Activated CD4-positive, alpha-beta T cell treated with anti-CD3 and anti-CD28 coated beads for 36 hours (primary cell): ENCODE measurements at regions of chr22 and their contacts with region 1.

Region 1: DNA sequence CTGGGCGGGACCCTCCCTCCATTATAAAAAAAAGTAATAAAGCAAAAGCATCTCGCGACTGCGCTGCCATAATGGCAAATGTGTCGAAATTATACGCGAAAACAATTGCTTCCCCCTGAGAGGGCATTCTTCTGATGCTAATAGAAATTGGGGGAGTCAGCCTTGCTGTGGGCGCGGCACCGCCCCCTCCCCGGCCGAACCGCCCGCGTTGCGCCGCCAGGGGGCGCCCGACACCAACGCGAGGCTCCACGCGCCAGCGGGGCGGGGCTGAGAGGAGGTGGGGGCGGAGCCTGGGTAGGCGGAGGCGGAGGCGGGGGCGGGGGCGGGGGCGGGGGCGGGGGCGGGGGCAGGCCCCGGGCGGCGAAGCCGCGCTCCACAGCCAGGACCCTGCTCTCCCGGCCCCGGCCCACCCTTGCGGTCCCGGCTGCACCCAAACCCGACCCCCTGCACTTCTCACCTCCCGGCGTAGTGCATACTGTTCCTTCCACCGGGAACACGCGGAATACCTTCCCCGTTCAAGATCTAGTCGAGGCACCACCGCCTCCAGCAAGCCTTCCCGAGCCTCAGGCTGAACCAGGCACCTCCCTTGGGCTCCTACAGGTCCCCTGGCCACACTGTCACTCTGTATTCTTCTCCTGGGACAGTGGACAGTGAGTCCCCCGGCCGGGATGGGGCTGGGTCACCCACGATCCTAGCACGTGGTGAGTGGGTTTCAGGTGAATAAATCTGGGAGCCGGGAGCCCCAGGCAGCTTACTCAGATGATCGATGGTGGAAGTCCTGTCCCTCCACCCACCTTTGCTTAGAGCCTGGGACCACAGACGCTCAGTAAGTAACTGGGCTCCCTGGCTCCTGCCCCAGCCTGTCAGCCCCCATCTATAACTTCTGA is 15.5 kb upstream of the UPK3A start:
- DNase-seq: peak; percentile 90
- ATAC-seq: peak; percentile 87
- H3K4me3 Mint-ChIP-seq: peak overlapping the region; percentile 67
- H3K27ac Mint-ChIP-seq: no peak overlapping the region
- H3K4me1 Mint-ChIP-seq: peaks cover 9% of the 10 kb centered on the region
- H3K27me3 Mint-ChIP-seq: peaks cover 10% of the 10 kb centered on the region

Region 2: GRCh38 chr22:45154383-45154782 is 114.8 kb before region 1 on chr22:
- CTCF ChIA-PET with region 1: no interaction called
- POLR2A ChIA-PET with region 1: no interaction called
- intact Hi-C with region 1: no loop called
- DNase-seq: no peak
- ATAC-seq: peak; percentile 30
- H3K4me3 Mint-ChIP-seq: no peak overlapping the region
- H3K27ac Mint-ChIP-seq: no peak overlapping the region
- H3K4me1 Mint-ChIP-seq: peaks cover 6% of the 10 kb centered on the region
- H3K27me3 Mint-ChIP-seq: no peaks in the 10 kb centered on the region

Region 3: GRCh38 chr22:45240810-45241631 is 28.2 kb before region 1 on chr22 and contains the start of gene KIAA0930:
- CTCF ChIA-PET with region 1: no interaction called
- POLR2A ChIA-PET with region 1: no interaction called
- intact Hi-C with region 1: loop called in 1 of 2 experiments (anchors 1 kb)
- DNase-seq: peak; percentile 91
- ATAC-seq: peak; percentile 69
- H3K4me3 Mint-ChIP-seq: peak within 1 kb of the TSS; percentile 89
- H3K27ac Mint-ChIP-seq: peak within 1 kb of the TSS; percentile 78
- H3K4me1 Mint-ChIP-seq: peaks cover 10% of the 10 kb centered on the region
- H3K27me3 Mint-ChIP-seq: no peaks in the 10 kb centered on the region
- total RNA-seq, gene KIAA0930: 24.8 to 29.6 TPM

Region 4: DNA sequence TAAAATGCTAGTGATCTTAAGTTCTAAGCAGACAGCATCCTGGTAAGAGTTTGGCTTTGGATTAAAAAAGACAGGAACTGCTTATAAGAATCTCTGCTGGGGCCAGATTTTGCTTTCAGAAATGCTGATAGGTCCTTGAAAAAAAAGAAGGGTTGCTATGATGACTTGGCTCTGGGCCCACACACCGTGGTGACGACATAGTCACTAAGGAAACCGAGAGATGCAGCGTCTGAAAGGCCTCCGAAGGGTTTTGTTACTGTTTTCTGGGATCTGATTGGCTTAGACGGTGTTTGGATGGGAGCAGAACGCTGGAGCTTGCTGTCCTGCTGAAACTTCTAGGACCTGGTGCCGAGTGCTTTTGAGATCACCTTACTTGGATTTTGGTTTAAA is 49.0 kb after region 1 on chr22:
- CTCF ChIA-PET with region 1: interaction called, 4 read pairs
- POLR2A ChIA-PET with region 1: no interaction called
- intact Hi-C with region 1: loop called in 1 of 2 experiments (anchors 1 kb)
- DNase-seq: peak; percentile 95
- ATAC-seq: peak; percentile 79
- H3K4me3 Mint-ChIP-seq: peak overlapping the region; percentile 72
- H3K27ac Mint-ChIP-seq: peak overlapping the region; percentile 95
- H3K4me1 Mint-ChIP-seq: peaks cover 89% of the 10 kb centered on the region
- H3K27me3 Mint-ChIP-seq: no peaks in the 10 kb centered on the region

Region 5: DNA sequence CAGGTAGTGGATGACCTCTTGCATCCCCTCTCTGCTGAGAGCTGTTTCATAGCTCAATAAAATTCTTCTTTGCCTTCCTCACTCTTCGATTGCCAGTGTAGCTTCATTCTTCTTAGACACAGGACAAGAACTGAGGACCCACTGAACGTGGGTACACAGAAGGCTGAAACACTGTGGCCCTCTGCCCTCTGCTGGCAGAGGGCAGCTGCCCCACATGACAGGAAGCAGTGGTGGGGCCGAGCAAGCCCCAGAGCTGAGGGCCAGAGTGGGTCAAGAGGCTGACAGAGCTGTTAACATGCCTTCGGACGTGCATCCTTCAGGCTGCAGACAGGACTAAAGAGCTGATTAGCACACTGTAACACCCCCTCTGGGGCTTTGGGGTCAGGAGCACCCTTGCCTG is 128.6 kb after region 1 on chr22:
- CTCF ChIA-PET with region 1: interaction called, 7 read pairs
- POLR2A ChIA-PET with region 1: no interaction called
- intact Hi-C with region 1: loop called in 1 of 2 experiments (anchors 2 kb)
- DNase-seq: peak; percentile 25
- ATAC-seq: no peak
- H3K4me3 Mint-ChIP-seq: no peak overlapping the region
- H3K27ac Mint-ChIP-seq: no peak overlapping the region
- H3K4me1 Mint-ChIP-seq: no peaks in the 10 kb centered on the region
- H3K27me3 Mint-ChIP-seq: peaks cover 2% of the 10 kb centered on the region

Region 6: GRCh38 chr22:45435544-45436139 is 166.4 kb after region 1 on chr22:
- CTCF ChIA-PET with region 1: interaction called, 6 read pairs
- POLR2A ChIA-PET with region 1: no interaction called
- intact Hi-C with region 1: loop called (anchors 1 kb)
- DNase-seq: peak; percentile 88
- ATAC-seq: peak; percentile 91
- H3K4me3 Mint-ChIP-seq: no peak overlapping the region
- H3K27ac Mint-ChIP-seq: no peak overlapping the region
- H3K4me1 Mint-ChIP-seq: peaks cover 11% of the 10 kb centered on the region
- H3K27me3 Mint-ChIP-seq: no peaks in the 10 kb centered on the region

Region 7: GRCh38 chr22:45553351-45554039 is 284.3 kb after region 1 on chr22:
- CTCF ChIA-PET with region 1: interaction called, 3 read pairs
- POLR2A ChIA-PET with region 1: no interaction called
- intact Hi-C with region 1: loop called (anchors 1 to 10 kb)
- DNase-seq: peak; percentile 81
- ATAC-seq: peak; percentile 55
- H3K4me3 Mint-ChIP-seq: no peak overlapping the region
- H3K27ac Mint-ChIP-seq: no peak overlapping the region
- H3K4me1 Mint-ChIP-seq: no peaks in the 10 kb centered on the region
- H3K27me3 Mint-ChIP-seq: peaks cover 7% of the 10 kb centered on the region